Astrocyte of the cerebellum (primary cell): ENCODE measurements at regions of chr1 and their contacts with region 1.

Region 1: GRCh38 chr1:212608209-212608955 is at the start of gene ATF3:
- DNase-seq: peak; percentile 97
- H3K4me3 ChIP-seq: peak within 1 kb of the TSS; percentile 72
- CTCF ChIP-seq: no peak

Region 2: GRCh38 chr1:212488397-212489283 is 119.7 kb before region 1 on chr1:
- in situ Hi-C with region 1: loop called (anchors 5 kb)
- DNase-seq: peak; percentile 62
- H3K4me3 ChIP-seq: no peak overlapping the region
- CTCF ChIP-seq: no peak

Region 3: DNA sequence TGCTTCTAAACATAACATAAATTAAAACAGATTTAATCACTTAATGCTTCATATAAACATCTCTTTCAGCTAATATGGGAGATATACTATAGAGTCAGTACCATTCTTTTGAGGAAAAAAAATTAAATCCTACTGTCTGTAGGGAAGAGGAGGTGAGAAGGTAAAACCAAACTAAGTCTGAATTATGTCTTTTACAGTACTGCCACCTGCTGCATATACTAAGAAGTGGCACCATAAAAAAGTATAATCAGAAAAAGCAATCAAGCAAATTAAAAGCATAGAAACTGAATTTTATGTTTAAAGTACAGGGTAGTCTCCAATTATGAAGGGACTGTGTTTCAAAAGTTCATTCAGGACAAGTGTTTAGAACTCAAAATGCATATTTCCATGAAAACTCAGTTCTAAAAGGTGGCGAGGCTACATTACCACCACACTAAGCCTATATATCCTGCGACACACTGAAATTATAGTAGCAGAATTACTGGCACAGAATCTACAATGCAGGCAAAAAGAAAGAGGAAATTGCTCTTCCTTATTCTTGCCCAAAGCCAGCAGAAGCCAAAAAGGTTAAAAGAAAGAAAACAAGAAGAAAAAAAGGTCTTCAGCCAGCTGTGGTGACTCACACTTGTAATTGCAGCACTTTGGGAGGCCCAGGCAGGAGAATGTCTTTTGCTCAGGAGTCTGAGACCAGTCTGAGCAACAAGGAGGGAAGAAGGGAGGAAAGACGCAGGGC is 174.2 kb after region 1 on chr1:
- in situ Hi-C with region 1: loop called (anchors 10 kb)
- DNase-seq: no peak
- H3K4me3 ChIP-seq: no peak overlapping the region
- CTCF ChIP-seq: peak; percentile 26